ENCODE measurements at regions of chr10 and their contacts with region 1.

Region 1: GRCh38 chr10:119878524-119878923 is 5.9 kb upstream of the MCMBP start:
- DNase-seq: no peak
- H3K4me3 ChIP-seq: no peak overlapping the region
- H3K27ac ChIP-seq: no peak overlapping the region
- H3K4me1 ChIP-seq: no peaks in the 10 kb centered on the region
- H3K27me3 ChIP-seq: no peaks in the 10 kb centered on the region
- CTCF ChIP-seq: no peak
- POLR2A ChIP-seq: no peak

Region 2: DNA sequence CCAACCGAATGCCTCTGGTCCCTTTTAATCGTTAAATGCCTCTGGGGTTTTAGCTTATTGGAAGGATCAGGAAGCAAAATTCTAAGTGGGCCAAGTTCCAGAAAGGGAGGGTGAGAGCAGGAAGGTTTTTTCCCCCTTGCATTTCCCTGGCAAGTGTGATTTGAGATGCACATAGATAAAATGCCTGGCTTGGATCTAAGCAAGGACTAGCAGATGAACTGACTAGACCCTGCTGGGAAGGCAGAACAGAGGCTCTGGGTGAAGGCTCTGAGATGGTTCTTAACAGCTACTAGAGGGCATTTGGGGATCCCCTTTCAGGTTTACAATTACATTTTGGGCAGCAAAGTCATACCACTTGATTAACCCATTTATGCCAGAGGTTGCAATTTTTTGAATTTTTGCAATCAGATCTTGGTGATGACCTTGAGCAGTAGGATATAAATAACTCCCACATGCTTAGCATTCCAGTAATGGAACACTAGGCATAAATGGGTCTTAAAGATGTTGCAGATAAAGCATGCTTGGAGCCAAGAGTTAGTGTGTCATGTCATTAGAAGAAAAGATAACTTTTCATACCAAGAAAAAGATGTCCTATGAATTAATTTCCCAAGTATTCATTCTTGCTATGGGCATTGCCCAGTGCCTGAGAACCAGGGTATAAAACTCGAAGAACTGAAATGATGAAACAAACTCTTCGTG is 219.9 kb after region 1 on chr10:
- intact Hi-C with region 1: loop called (anchors 5 kb)
- DNase-seq: no peak
- H3K4me3 ChIP-seq: no peak overlapping the region
- H3K27ac ChIP-seq: no peak overlapping the region
- H3K4me1 ChIP-seq: no peaks in the 10 kb centered on the region
- H3K27me3 ChIP-seq: no peaks in the 10 kb centered on the region
- CTCF ChIP-seq: no peak
- POLR2A ChIP-seq: no peak

Region 3: DNA sequence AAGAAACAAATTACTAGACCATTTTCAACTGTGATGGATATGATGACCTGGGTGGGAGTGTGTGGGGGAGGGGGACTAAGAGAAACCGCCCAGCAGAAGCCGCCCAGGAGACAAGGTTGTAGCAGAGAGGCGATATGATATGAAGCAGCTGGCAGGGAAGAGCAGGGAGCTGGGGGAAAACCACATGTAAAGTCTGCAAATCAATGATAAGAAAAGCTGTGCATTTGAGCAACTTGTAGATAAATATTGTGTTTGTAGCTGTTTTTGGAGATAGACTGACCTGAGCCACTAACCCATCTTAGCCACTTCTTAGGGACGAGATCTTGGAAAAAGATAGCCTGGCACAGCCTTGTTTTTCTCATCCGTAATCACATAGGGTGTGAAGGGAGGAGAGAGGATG is 266.6 kb after region 1 on chr10:
- intact Hi-C with region 1: no loop called
- DNase-seq: no peak
- H3K4me3 ChIP-seq: no peak overlapping the region
- H3K27ac ChIP-seq: no peak overlapping the region
- H3K4me1 ChIP-seq: no peaks in the 10 kb centered on the region
- H3K27me3 ChIP-seq: no peaks in the 10 kb centered on the region
- CTCF ChIP-seq: no peak
- POLR2A ChIP-seq: no peak

Measured in breast epithelium (tissue), 4 donors.